A673 (cell line): ENCODE measurements at regions of chr12 and their contacts with region 1.

Region 1: DNA sequence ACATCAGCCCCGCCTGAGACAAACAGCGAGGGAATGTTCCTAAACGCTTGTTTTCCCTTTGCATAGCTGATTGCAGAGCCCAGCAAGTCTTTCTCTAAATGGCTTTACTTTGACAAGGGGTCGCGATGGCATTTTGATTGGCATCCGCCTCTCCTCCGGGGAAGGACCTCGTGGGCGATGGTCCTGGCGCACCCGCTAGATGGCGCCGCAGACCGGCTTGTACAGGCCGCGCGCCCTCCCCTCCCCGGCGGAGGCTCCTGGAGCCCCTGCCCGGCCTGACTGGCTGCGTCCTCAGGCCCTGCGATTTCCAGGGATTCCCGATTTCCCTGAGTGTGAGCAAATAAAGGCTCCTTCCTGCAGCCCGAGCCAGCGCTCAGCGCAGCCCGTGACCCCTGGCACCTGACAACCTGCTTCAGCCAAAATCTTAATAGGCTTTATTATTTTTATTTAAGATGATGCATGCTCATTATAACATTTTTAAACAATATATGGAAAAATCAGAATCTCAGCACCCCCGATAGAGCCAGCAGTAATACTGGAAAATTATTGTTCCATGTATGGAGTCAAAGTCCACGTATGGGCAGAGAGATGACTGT is 468.3 kb downstream of the AACS start:
- DNase-seq: peak; percentile 68
- H3K4me3 ChIP-seq: no peak overlapping the region
- H3K27ac ChIP-seq: no peak overlapping the region
- H3K4me1 ChIP-seq: no peaks in the 10 kb centered on the region
- H3K27me3 ChIP-seq: peaks cover 3% of the 10 kb centered on the region
- CTCF ChIP-seq: peak; percentile 84

Region 2: DNA sequence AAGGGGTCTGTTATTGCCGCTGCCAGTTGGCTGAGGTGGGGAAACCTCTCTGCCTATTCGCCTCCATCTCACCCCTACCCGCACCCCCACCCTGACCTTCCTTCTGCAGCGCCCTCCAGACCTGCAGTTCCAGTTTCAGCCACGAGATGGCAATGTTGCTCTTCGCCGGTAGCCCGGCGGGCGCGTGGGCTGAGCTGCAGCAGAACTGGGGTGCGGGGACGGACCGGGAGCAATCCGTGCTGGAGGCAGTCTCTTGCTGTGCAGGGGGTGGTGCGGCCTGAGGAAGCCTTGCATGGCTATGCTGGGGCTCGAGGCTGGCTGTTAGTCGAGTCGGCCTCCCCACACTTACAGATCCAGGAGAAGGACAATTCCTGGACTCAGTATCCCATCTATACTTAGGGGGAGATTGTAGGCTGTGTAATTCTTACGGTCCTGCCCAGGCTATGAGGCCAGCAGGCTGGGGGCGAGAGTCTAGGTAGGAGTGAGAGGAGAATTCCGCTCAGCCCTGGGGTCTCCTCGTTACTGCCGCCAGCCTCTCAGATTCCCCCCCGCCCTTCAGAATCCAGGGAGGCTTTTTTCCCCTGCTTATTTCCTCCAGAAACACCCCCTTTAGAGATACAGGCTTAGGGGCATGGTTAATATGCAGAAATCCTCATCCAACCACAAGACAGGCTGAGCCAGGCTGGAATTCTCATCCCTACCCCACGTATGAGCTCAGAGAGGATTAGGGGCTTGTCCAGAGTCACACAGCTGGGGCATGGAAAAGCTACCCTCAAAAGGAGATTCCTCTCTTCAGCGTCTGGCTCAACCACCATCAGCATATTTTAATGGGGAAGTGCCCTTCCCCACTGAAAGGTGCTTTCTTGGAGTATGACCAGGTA is 350.1 kb before region 1 on chr12:
- CTCF ChIA-PET with region 1: no interaction called
- POLR2A ChIA-PET with region 1: no interaction called
- intact Hi-C with region 1: loop called (anchors 5 kb)
- DNase-seq: peak; percentile 89
- H3K4me3 ChIP-seq: no peak overlapping the region
- H3K27ac ChIP-seq: no peak overlapping the region
- H3K4me1 ChIP-seq: peaks cover 31% of the 10 kb centered on the region
- H3K27me3 ChIP-seq: peaks cover 27% of the 10 kb centered on the region
- CTCF ChIP-seq: peak; percentile 99

Region 3: DNA sequence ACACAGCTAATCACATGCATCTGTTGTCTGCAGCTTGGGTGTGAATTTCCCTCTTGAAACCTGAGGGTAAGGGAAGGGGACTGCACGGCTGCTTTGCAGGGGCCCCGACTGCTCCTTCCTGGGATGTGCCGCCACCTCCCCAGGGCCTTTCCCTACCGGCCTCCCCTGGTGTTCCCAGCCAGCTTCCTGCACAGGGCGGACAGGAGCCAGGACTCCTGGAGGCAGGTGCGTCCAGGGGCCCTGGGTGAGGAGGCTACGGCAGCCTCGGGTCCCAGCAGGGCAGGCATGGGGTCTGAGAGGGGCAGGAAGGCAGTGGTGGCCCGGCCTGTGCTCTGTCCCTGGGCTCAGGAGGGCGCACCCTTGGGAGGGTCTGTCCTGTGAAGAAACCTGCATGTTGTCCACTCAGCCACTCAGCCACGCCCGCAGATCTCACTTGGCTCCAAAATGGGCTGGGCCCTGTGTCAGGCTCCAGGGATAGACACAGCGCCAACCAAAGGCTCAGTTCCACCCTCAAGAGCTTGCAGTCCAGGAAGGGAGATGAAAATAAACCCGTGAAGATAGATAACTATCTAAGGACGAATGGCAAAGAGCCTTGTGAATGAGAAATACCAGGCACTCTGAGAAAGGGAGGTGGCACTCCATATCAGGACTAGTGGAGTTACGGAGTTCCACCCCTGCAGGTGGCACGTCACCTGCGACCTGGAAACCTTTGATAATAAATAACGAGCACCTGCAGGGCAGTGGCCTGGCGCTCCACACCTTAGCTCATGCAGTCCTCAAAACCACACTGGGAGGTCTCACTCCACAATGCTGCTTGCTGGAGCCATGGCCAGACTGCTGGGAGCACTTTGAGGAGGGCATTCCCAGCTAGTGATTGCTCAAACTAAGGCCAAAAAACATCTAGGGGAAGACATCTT is 40.9 kb before region 1 on chr12:
- CTCF ChIA-PET with region 1: no interaction called
- POLR2A ChIA-PET with region 1: no interaction called
- intact Hi-C with region 1: no loop called
- DNase-seq: no peak
- H3K4me3 ChIP-seq: no peak overlapping the region
- H3K27ac ChIP-seq: no peak overlapping the region
- H3K4me1 ChIP-seq: no peaks in the 10 kb centered on the region
- H3K27me3 ChIP-seq: no peaks in the 10 kb centered on the region
- CTCF ChIP-seq: no peak

Region 4: DNA sequence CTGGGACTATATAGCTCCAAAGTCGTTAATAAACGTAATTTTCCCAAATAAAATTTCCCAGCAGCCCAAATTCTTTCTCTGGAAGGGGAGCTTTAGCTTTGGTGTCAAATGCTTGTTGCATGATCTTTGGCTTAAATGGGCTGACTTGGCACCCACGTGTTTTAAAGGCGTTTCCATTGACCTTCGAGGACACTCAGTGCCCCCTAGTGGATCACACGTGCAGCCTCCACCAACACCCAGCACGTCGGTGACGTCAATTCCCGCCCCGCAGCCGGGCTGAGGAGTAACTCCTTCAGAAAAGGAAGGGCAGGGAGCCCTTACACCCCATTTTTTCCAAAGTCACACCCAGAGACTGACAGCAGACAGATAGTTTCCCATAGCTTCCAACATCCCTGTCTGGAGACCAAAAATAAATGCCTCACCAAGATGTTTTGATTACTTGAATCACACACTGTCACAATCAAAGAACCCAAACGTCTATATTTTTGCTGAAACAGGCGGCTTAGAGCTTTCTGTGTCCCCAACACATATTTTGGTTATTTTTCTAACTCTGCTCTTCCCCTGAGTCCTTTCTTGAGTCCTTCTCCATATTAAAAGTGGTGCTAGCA is 239.6 kb after region 1 on chr12:
- CTCF ChIA-PET with region 1: no interaction called
- POLR2A ChIA-PET with region 1: no interaction called
- intact Hi-C with region 1: loop called (anchors 5 kb)
- DNase-seq: peak; percentile 72
- H3K4me3 ChIP-seq: no peak overlapping the region
- H3K27ac ChIP-seq: no peak overlapping the region
- H3K4me1 ChIP-seq: no peaks in the 10 kb centered on the region
- H3K27me3 ChIP-seq: peaks cover 4% of the 10 kb centered on the region
- CTCF ChIP-seq: peak; percentile 70

Region 5: DNA sequence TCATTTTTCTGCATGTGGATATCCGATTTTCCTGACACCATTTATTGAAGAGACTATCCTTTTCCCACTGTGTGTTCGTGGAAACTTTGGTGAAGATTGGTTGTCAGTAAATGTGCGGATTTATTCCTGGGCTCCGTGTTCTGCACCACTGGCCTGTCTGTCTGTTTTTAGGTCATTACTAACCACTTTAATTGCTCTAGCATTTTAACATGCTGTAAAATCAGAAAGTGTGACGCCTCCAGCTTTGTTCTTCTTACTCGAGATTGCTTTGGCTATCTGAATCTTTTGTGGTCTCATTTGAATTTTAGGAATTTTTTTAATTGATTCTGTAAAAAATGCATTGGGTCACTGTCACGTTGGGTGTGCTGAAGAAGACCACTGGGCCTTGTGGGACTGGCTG is 990.4 kb after region 1 on chr12:
- CTCF ChIA-PET with region 1: no interaction called
- POLR2A ChIA-PET with region 1: no interaction called
- intact Hi-C with region 1: no loop called
- DNase-seq: no peak
- H3K4me3 ChIP-seq: no peak overlapping the region
- H3K27ac ChIP-seq: no peak overlapping the region
- H3K4me1 ChIP-seq: no peaks in the 10 kb centered on the region
- H3K27me3 ChIP-seq: no peaks in the 10 kb centered on the region
- CTCF ChIP-seq: no peak

Region 6: DNA sequence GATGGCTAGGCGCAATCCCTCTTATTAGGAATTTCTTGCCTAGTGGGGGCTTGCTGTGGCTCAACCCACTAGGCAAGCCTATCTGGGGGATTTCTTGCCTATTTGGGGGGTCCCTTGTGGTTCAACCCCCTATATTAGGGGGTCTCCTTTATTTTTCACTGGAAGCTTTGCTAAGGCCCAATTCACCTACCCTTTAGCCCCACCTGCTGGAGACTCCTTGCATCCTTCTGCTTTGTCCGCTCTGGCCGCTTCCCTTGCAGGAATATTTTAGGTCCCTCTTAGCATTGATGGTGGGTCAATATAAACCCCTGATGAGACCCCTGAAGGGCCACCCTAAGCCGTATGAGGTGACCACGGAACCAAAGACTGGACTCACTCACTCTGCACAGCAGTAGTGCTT is 1083.8 kb after region 1 on chr12:
- CTCF ChIA-PET with region 1: no interaction called
- POLR2A ChIA-PET with region 1: no interaction called
- intact Hi-C with region 1: loop called (anchors 5 kb)
- DNase-seq: peak; percentile 55
- H3K4me3 ChIP-seq: no peak overlapping the region
- H3K27ac ChIP-seq: no peak overlapping the region
- H3K4me1 ChIP-seq: no peaks in the 10 kb centered on the region
- H3K27me3 ChIP-seq: no peaks in the 10 kb centered on the region
- CTCF ChIP-seq: peak; percentile 74

Region 7: DNA sequence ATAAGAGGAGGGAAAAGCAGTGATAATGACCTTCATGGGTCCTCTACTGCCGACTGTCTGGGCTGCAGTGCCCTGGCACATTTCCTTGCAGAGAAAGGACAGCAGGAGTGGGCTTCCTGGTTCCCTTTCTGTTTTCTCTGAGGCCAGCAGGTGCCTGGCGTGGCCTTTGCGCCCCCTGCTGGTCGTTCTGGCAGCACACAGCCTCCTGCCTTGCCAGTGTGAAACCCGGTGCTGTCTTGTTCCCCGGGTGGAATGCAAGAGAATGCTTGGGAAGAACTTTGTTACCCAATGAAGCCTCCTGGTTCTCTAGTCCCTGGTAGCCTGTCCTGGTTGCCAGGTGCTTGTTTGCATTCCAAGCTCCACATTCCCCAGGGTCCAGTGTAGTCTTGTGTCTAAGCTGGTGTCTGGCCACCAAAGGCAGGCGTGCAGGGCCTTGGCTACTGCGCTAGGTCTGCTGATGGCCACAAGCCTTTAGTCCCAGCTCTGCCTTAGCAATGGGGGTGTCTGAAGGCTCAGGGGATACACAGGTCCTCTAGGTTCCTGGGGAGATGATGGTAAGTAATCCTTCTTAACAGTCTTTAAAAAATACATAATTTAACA is 1341.0 kb after region 1 on chr12:
- CTCF ChIA-PET with region 1: no interaction called
- POLR2A ChIA-PET with region 1: no interaction called
- intact Hi-C with region 1: loop called (anchors 2 kb)
- DNase-seq: peak; percentile 87
- H3K4me3 ChIP-seq: no peak overlapping the region
- H3K27ac ChIP-seq: no peak overlapping the region
- H3K4me1 ChIP-seq: peaks cover 6% of the 10 kb centered on the region
- H3K27me3 ChIP-seq: no peaks in the 10 kb centered on the region
- CTCF ChIP-seq: peak; percentile 99

Region 8: GRCh38 chr12:127381048-127381668 is 1847.6 kb after region 1 on chr12:
- CTCF ChIA-PET with region 1: no interaction called
- POLR2A ChIA-PET with region 1: no interaction called
- intact Hi-C with region 1: loop called (anchors 5 kb)
- DNase-seq: peak; percentile 81
- H3K4me3 ChIP-seq: peak overlapping the region; percentile 42
- H3K27ac ChIP-seq: peak overlapping the region; percentile 26
- H3K4me1 ChIP-seq: peaks cover 3% of the 10 kb centered on the region
- H3K27me3 ChIP-seq: no peaks in the 10 kb centered on the region
- CTCF ChIP-seq: peak; percentile 90